Calu3 (cell line): ENCODE measurements at regions of chr1 and their contacts with region 1.

Region 1: GRCh38 chr1:29513357-29513756 is 277.0 kb downstream of the PTPRU start:
- DNase-seq: peak; percentile 72
- H3K4me3 Mint-ChIP-seq: no peak overlapping the region
- H3K27ac Mint-ChIP-seq: no peak overlapping the region
- H3K4me1 Mint-ChIP-seq: no peaks in the 10 kb centered on the region
- H3K27me3 Mint-ChIP-seq: peaks cover 86% of the 10 kb centered on the region
- CTCF ChIP-seq: peak; percentile 32

Region 2: GRCh38 chr1:29703596-29704370 is 190.4 kb after region 1 on chr1:
- CTCF ChIA-PET with region 1: no interaction called
- intact Hi-C with region 1: loop called (anchors 10 kb)
- DNase-seq: peak; percentile 47
- H3K4me3 Mint-ChIP-seq: no peak overlapping the region
- H3K27ac Mint-ChIP-seq: no peak overlapping the region
- H3K4me1 Mint-ChIP-seq: peaks cover 11% of the 10 kb centered on the region
- H3K27me3 Mint-ChIP-seq: peaks cover 79% of the 10 kb centered on the region
- CTCF ChIP-seq: peak; percentile 80

Region 3: DNA sequence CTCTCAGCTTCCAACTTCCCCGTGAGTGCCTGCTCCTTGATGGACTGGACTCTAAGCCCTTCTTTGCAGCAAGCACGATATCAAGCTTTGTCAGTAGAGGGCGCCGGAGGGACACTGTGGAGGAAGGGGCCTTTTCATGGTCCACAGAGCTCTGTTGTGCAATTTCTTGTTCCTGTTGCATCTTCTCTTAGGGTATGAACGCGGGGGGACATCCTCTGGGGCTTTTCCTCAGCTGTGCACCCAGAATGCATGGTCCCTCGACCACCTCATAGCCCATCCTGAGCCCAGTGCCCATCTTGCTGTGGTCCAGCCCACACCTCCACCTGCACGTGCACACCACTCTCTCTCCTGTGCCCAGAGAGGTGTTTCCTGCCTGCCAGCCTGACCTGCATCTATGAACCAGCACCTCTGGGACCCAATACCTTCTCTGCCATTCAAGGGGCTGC is 279.8 kb after region 1 on chr1:
- CTCF ChIA-PET with region 1: no interaction called
- intact Hi-C with region 1: loop called (anchors 2 kb)
- DNase-seq: peak; percentile 89
- H3K4me3 Mint-ChIP-seq: no peak overlapping the region
- H3K27ac Mint-ChIP-seq: peak overlapping the region; percentile 56
- H3K4me1 Mint-ChIP-seq: peaks cover 9% of the 10 kb centered on the region
- H3K27me3 Mint-ChIP-seq: peaks cover 56% of the 10 kb centered on the region
- CTCF ChIP-seq: peak; percentile 85

Region 4: GRCh38 chr1:29851691-29852090 is 338.3 kb after region 1 on chr1:
- CTCF ChIA-PET with region 1: no interaction called
- intact Hi-C with region 1: loop called (anchors 10 kb)
- DNase-seq: peak; percentile 42
- H3K4me3 Mint-ChIP-seq: no peak overlapping the region
- H3K27ac Mint-ChIP-seq: no peak overlapping the region
- H3K4me1 Mint-ChIP-seq: peaks cover 8% of the 10 kb centered on the region
- H3K27me3 Mint-ChIP-seq: peaks cover 54% of the 10 kb centered on the region
- CTCF ChIP-seq: no peak

Region 5: GRCh38 chr1:30106125-30106524 is 592.8 kb after region 1 on chr1:
- CTCF ChIA-PET with region 1: no interaction called
- intact Hi-C with region 1: loop called (anchors 10 kb)
- DNase-seq: peak; percentile 74
- H3K4me3 Mint-ChIP-seq: no peak overlapping the region
- H3K27ac Mint-ChIP-seq: no peak overlapping the region
- H3K4me1 Mint-ChIP-seq: no peaks in the 10 kb centered on the region
- H3K27me3 Mint-ChIP-seq: peaks cover 100% of the 10 kb centered on the region
- CTCF ChIP-seq: peak; percentile 84